ENCODE measurements at regions of chr9 and their contacts with region 1.

Region 1: GRCh38 chr9:92648474-92649372 is 21.2 kb downstream of the IPPK start:
- DNase-seq: no peak
- ATAC-seq: no peak
- H3K4me3 ChIP-seq: no peak overlapping the region
- H3K27ac ChIP-seq: no peak overlapping the region
- H3K4me1 ChIP-seq: no peaks in the 10 kb centered on the region; a peak in 1 of 5 replicates
- H3K27me3 ChIP-seq: no peaks in the 10 kb centered on the region
- CTCF ChIP-seq: no peak
- EP300 ChIP-seq: no peak
- POLR2A ChIP-seq: no peak
- RAD21 ChIP-seq: no peak

Region 2: DNA sequence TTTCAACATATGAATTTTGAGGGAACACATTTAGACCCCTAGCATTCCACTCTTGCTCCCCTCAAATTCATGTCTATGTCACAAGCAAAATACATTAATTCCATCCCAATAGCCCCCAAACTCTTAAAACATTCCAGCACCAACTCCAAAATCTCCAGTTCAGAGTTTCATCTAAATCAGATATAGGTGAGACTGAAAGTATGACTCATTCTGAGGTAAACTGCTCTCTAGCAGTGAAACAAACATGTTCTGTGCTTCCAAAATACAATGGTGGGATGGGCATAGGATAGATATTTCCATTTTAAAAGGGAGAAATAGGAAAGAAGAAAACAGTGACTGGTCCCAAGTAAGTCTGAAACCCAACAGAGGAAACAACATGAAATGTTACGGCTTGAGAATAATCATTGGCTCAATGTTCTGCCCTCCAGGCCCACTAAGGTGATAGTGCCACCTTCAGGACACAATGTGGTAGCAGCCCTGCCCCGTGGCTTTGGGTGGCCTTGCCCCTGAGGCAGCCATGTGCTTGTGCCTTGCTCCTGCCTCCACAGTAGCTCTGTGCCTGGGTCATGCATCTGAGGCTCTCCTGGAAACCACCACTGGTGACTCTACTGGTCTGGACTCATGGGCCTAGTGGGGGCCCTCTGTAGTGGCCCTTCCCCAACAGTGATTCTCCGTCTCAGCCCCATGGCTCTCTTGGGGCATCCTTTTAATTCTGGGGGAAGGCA is 57.7 kb after region 1 on chr9:
- CTCF ChIA-PET with region 1: no interaction called
- POLR2A ChIA-PET with region 1: no interaction called
- in situ Hi-C with region 1: no loop called
- intact Hi-C with region 1: loop called (anchors 5 kb)
- DNase-seq: peak; percentile 17 to 47 (median 38)
- ATAC-seq: peak; percentile 96
- H3K4me3 ChIP-seq: no peak overlapping the region
- H3K27ac ChIP-seq: no peak overlapping the region
- H3K4me1 ChIP-seq: no peaks in the 10 kb centered on the region
- H3K27me3 ChIP-seq: no peaks in the 10 kb centered on the region
- CTCF ChIP-seq: peak; percentile 69 to 71 (median 70)
- EP300 ChIP-seq: no peak
- POLR2A ChIP-seq: no peak
- RAD21 ChIP-seq: peak in 1 of 2 experiments; percentile 63; a peak in 2 of 4 replicates

Measured in K562 (cell line).